Transverse colon (tissue), 4 donors: ENCODE measurements at regions of chr5 and their contacts with region 1.

Region 1: DNA sequence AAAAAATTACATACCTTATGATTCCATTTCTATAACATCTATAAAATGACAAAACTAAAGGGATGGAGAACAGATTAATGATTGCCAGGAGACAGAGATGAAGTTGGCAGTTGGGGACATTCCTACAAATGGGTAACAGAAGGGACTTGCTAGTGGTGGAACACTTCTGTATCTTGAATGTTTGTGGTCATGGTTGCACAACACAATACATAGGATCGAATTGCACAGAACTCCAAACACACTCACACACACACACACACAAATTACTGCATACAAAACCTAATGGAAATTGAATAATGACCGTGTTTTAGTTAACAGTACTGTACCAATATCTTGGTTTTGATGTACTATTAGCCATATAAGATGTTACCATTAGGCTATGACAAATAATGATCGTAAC is 330.7 kb upstream of the POU5F2 start:
- DNase-seq: no peak
- H3K4me3 ChIP-seq: no peak overlapping the region
- H3K27ac ChIP-seq: no peak overlapping the region
- H3K4me1 ChIP-seq: no peaks in the 10 kb centered on the region
- H3K27me3 ChIP-seq: no peaks in the 10 kb centered on the region
- CTCF ChIP-seq: no peak
- EP300 ChIP-seq: no peak
- POLR2A ChIP-seq: no peak

Region 2: GRCh38 chr5:93978222-93978621 is 93.9 kb before region 1 on chr5:
- in situ Hi-C with region 1: no loop called
- intact Hi-C with region 1: no loop called
- DNase-seq: no peak
- H3K4me3 ChIP-seq: no peak overlapping the region
- H3K27ac ChIP-seq: no peak overlapping the region
- H3K4me1 ChIP-seq: no peaks in the 10 kb centered on the region
- H3K27me3 ChIP-seq: no peaks in the 10 kb centered on the region
- CTCF ChIP-seq: no peak
- EP300 ChIP-seq: no peak
- POLR2A ChIP-seq: no peak

Region 3: DNA sequence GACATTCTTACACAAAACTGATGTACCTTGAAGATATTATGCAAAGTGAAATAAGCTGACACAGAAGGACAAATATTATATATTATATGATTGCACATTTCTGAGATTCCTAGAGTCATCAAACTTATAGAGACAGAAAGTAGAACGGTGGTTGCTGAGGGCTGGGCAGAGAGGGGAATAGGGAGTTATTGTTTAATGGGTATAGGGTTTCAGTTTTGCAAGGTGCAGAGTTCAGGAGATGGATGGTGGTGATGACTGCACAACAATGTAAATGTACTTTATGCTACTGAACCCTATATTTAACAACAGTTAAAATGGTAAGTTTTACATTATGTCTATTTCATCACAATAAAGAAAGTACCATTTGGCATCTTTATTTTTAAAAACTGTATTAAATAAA is 14.9 kb before region 1 on chr5:
- in situ Hi-C with region 1: no loop called
- intact Hi-C with region 1: loop called (anchors 2 kb)
- DNase-seq: no peak
- H3K4me3 ChIP-seq: no peak overlapping the region
- H3K27ac ChIP-seq: no peak overlapping the region
- H3K4me1 ChIP-seq: no peaks in the 10 kb centered on the region
- H3K27me3 ChIP-seq: no peaks in the 10 kb centered on the region
- CTCF ChIP-seq: no peak
- EP300 ChIP-seq: no peak
- POLR2A ChIP-seq: no peak

Region 4: DNA sequence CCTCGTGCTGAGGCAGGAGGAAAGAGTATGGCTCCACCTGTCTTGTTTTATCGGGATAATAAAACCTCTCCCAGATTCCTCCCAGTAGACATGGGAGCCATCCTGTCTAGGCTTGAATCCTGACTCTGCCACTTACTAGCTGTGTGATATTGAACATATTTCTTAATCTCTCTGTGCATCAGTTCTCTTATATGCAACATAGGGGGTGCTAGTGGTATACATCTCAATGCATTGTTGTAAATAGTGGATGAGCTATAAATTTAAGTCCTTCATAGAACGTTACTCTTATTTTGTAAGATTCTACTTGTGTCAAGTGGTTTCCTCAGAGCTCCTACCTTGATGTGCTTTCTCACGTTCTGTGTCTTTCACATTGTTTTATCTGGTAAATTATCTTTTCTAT is 87.0 kb after region 1 on chr5:
- in situ Hi-C with region 1: no loop called
- intact Hi-C with region 1: no loop called
- DNase-seq: no peak
- H3K4me3 ChIP-seq: no peak overlapping the region
- H3K27ac ChIP-seq: no peak overlapping the region
- H3K4me1 ChIP-seq: no peaks in the 10 kb centered on the region
- H3K27me3 ChIP-seq: no peaks in the 10 kb centered on the region
- CTCF ChIP-seq: no peak
- EP300 ChIP-seq: no peak
- POLR2A ChIP-seq: no peak

Region 5: DNA sequence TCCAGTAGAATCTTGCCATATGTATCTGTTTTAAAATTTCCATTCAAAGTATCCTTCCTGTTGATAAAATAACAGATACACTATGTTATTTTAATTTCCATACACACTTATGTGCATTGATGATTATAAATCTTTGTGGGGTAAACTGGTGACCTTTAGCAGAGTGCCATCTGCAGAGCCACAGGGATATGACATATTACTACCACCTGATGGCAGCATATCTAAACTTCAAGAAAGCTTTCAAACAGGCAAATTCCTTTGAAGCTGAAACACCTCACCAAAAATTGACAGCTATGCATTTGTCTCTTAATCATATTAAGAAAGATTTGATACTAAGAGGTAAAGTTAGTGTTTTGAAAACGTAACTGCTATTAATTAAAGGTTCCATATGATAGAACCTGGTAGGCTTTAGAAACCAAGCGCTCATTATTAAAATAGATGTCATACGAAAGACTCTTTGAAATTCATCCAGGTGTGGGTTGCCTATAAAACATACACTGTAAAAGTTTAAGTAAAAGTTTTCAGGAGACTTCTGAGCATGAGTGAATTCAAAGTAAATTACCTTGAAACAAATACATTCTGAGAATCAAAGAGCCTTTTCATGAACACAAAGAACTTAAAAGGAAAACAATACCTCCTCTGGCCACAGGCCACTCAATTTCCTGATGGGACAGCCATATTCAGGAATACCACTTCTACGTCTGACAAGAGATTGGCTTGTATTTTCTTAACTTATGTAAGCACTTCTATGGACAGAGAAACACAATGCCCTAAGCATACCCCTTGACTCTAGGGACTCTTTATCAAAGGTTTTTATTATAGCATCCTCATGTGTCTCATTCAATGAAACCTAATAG is 453.0 kb after region 1 on chr5:
- in situ Hi-C with region 1: no loop called
- intact Hi-C with region 1: no loop called
- DNase-seq: no peak
- H3K4me3 ChIP-seq: no peak overlapping the region
- H3K27ac ChIP-seq: no peak overlapping the region
- H3K4me1 ChIP-seq: no peaks in the 10 kb centered on the region
- H3K27me3 ChIP-seq: no peaks in the 10 kb centered on the region
- CTCF ChIP-seq: peak; percentile 33 to 48 (median 43)
- EP300 ChIP-seq: no peak
- POLR2A ChIP-seq: no peak